Activated B cell treated with CpG ODN at 0.5 μM for 24 hours (primary cell): ENCODE measurements at regions of chr10 and their contacts with region 1.

Region 1: GRCh38 chr10:101467286-101467770 is 113.4 kb downstream of the BTRC start:
- DNase-seq: no peak
- ATAC-seq: peak; percentile 78
- H3K4me3 Mint-ChIP-seq: no peak overlapping the region
- H3K27ac Mint-ChIP-seq: no peak overlapping the region
- H3K4me1 Mint-ChIP-seq: peaks cover 7% of the 10 kb centered on the region
- H3K27me3 Mint-ChIP-seq: no peaks in the 10 kb centered on the region
- CTCF ChIP-seq: peak; percentile 94

Region 2: GRCh38 chr10:101182936-101183335 is 284.4 kb before region 1 on chr10:
- CTCF ChIA-PET with region 1: no interaction called
- POLR2A ChIA-PET with region 1: no interaction called
- intact Hi-C with region 1: no loop called
- DNase-seq: no peak
- ATAC-seq: no peak
- H3K4me3 Mint-ChIP-seq: no peak overlapping the region
- H3K27ac Mint-ChIP-seq: no peak overlapping the region
- H3K4me1 Mint-ChIP-seq: no peaks in the 10 kb centered on the region
- H3K27me3 Mint-ChIP-seq: peaks cover 31% of the 10 kb centered on the region
- CTCF ChIP-seq: no peak

Region 3: DNA sequence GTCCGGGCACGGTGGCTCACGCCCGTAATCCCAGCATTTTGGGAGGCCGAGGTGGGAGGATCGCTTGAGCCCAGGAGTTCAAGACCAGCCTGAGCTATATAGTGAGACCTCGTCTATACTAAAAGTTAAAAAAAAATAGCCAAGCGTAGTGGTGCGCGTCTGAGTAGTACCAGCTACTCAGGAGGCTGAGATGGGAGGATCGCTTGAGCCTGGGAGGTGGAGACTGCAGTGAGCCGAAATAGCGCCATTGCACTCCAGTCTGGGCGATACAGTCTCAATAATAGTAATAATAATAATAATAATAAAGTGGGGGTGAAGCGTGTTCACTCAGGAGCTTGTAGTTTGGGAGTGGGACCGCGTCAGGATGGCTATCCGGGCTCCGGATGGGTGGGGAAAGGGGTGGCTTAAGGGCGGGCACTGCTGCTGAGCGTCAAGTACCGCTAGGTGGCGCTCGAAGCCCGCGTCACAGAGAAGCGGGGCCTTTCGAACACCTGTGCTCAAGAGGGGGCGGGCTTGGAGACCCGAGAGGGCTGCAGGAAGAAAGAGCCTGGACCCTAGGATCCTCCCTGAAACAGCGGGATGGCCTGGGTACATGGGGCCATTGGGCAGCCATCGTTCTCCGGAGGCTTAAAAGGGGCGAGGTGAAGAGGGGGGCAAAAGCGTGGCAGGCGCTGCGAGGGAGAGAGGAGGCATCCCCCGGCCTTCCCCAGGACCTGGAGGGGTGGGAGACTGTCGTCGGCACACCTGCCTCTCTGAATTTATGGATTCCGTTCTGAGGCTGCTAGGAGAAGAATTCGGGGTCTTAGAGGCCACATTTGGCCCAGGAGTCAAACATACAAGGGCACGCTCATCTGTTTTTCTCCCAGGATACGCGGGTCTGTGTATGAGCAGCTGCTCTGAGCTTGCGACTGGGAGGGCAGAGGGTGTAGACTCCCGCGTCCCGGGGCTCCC is 252.6 kb before region 1 on chr10:
- CTCF ChIA-PET with region 1: interaction called, 27 read pairs
- POLR2A ChIA-PET with region 1: interaction called, 6 read pairs
- intact Hi-C with region 1: loop called (anchors 1 kb)
- DNase-seq: peak; percentile 72
- ATAC-seq: peak; percentile 75
- H3K4me3 Mint-ChIP-seq: peak overlapping the region; percentile 60
- H3K27ac Mint-ChIP-seq: peak overlapping the region; percentile 68
- H3K4me1 Mint-ChIP-seq: peaks cover 32% of the 10 kb centered on the region
- H3K27me3 Mint-ChIP-seq: peaks cover 56% of the 10 kb centered on the region
- CTCF ChIP-seq: peak; percentile 73

Region 4: GRCh38 chr10:101297901-101298486 is 169.3 kb before region 1 on chr10:
- CTCF ChIA-PET with region 1: no interaction called
- POLR2A ChIA-PET with region 1: no interaction called
- intact Hi-C with region 1: loop called (anchors 5 kb)
- DNase-seq: peak; percentile 54
- ATAC-seq: peak; percentile 80
- H3K4me3 Mint-ChIP-seq: no peak overlapping the region
- H3K27ac Mint-ChIP-seq: no peak overlapping the region
- H3K4me1 Mint-ChIP-seq: peaks cover 3% of the 10 kb centered on the region
- H3K27me3 Mint-ChIP-seq: peaks cover 56% of the 10 kb centered on the region
- CTCF ChIP-seq: peak; percentile 71

Region 5: DNA sequence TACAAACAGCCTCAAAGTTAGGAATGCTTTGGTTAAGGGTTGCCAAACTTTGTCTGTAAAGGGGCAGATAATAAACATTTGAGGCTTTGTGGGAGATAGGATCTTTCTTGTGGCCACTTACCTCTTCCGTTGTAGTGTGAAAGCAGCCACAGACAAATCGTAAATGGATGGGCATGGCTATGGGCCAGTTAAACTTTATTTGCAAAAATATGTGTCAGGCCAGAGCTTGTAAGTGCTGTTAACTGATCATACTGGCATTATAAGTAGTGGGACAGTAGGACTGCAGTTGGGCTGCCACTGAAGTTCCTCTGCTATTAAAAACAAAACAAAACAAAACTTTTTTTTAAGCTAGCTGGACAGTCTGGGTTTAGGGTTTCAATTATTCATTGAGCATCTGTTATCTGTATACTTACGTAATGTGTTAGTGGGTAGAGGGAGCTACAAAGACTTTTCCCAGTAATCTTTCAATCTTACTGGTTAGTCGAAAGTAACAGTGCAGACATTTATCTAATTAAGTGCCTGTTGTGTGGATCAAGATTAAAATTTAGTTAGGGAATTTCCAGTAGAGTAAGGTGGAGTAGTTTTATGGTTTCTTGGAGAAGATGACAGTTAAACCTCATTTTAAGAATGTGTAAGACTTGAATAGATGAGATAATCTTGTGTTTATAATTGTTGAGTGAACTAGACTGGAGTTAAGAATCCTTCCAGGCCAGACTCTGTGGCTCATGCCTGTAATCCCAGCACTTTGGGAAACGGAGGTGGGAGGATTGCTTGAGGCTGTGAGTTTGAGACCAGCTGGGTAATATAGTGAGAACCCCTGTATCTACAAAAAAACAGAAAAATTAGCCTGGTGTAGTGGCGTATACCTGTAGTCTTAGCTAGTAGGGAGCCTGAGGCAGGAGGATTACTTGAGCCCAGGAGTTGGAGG is 13.3 kb before region 1 on chr10:
- CTCF ChIA-PET with region 1: interaction called, 10 read pairs
- POLR2A ChIA-PET with region 1: no interaction called
- intact Hi-C with region 1: no loop called
- DNase-seq: no peak
- ATAC-seq: no peak
- H3K4me3 Mint-ChIP-seq: no peak overlapping the region
- H3K27ac Mint-ChIP-seq: no peak overlapping the region
- H3K4me1 Mint-ChIP-seq: peaks cover 20% of the 10 kb centered on the region
- H3K27me3 Mint-ChIP-seq: no peaks in the 10 kb centered on the region
- CTCF ChIP-seq: no peak